Panc1 (cell line): ENCODE measurements at regions of chr2 and their contacts with region 1.

Region 1: DNA sequence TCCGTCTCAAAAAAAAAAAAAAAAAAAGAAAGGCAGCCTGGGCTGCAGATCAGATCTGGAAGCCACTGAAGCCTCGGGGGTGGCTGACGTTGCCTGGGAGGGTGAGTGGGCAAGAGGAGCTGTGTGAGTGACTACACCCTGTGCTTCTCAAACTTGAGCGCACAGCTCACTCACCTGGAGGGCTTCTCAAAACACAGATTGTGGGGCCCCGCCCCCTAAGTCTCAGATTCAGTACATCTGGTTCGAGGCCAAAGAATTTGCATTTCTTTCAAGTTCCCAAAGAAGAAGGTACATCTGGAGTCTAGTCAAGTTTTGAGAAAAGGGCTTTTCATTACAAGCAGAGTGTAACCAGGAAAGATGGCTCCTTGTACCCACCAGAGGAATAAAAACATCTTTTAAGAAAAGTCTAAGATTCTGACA is 97.7 kb upstream of the CAB39 start:
- DNase-seq: no peak
- ATAC-seq: no peak
- H3K4me3 ChIP-seq: no peak overlapping the region
- H3K27ac ChIP-seq: no peak overlapping the region
- H3K4me1 ChIP-seq: no peaks in the 10 kb centered on the region
- H3K27me3 ChIP-seq: no peaks in the 10 kb centered on the region
- CTCF ChIP-seq: no peak

Region 2: DNA sequence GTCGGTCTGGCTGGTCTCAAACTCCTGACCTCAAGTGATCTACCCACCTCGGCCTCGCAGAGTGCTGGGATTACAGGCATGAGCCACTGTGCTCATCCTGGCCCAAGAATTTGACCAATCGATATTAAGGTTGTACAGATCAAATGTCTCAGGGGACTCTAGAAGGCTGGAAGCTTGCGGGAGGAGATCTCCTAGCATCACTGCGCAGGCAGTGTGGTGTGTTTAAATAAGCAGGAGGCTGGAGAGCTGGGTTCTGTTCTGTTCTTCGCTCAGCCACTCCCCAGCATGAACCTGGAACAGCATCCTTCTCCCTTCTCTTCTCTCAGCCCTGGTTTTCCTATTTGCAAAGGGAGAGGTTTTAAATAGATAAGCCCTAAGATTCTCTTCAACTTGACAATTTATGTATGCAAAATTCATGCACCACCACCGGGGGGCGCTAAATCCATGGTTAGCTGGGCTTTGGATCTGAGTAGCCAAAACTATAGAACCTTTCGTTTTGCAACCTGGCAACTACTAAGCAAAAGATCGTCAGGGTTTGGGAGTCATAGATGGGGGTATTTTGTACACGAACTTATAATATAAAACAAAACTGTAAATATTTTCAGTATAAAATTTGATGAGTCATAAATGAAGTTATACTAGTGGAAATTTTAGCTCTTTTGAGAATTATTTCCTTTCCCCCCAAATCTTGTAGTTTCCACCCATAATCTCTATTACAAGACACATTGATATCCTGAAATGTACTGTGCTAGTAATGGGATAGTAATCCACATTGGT is 606.8 kb before region 1 on chr2:
- CTCF ChIA-PET with region 1: no interaction called
- POLR2A ChIA-PET with region 1: no interaction called
- in situ Hi-C with region 1: no loop called
- intact Hi-C with region 1: loop called (anchors 1 kb)
- DNase-seq: peak; percentile 56
- ATAC-seq: peak; percentile 76
- H3K4me3 ChIP-seq: no peak overlapping the region
- H3K27ac ChIP-seq: no peak overlapping the region
- H3K4me1 ChIP-seq: no peaks in the 10 kb centered on the region
- H3K27me3 ChIP-seq: no peaks in the 10 kb centered on the region
- CTCF ChIP-seq: peak; percentile 92

Region 3: GRCh38 chr2:230068016-230068650 is 546.8 kb before region 1 on chr2:
- CTCF ChIA-PET with region 1: interaction called, 3 read pairs
- POLR2A ChIA-PET with region 1: no interaction called
- in situ Hi-C with region 1: no loop called
- intact Hi-C with region 1: loop called (anchors 5 kb)
- DNase-seq: no peak
- ATAC-seq: peak; percentile 78
- H3K4me3 ChIP-seq: peak overlapping the region; percentile 51 to 70
- H3K27ac ChIP-seq: peak overlapping the region; percentile 39; the same call in 1 of the 2 replicates
- H3K4me1 ChIP-seq: no peaks in the 10 kb centered on the region
- H3K27me3 ChIP-seq: no peaks in the 10 kb centered on the region
- CTCF ChIP-seq: no peak

Region 4: GRCh38 chr2:230170532-230170931 is 444.4 kb before region 1 on chr2:
- CTCF ChIA-PET with region 1: no interaction called
- POLR2A ChIA-PET with region 1: no interaction called
- in situ Hi-C with region 1: no loop called
- intact Hi-C with region 1: loop called (anchors 10 kb)
- DNase-seq: no peak
- ATAC-seq: no peak
- H3K4me3 ChIP-seq: no peak overlapping the region
- H3K27ac ChIP-seq: no peak overlapping the region
- H3K4me1 ChIP-seq: no peaks in the 10 kb centered on the region
- H3K27me3 ChIP-seq: no peaks in the 10 kb centered on the region
- CTCF ChIP-seq: no peak

Region 5: GRCh38 chr2:230798769-230799399 is 184.0 kb after region 1 on chr2:
- CTCF ChIA-PET with region 1: no interaction called
- POLR2A ChIA-PET with region 1: no interaction called
- in situ Hi-C with region 1: no loop called
- intact Hi-C with region 1: loop called (anchors 5 kb)
- DNase-seq: no peak
- ATAC-seq: no peak; the same call in 1 of the 2 replicates
- H3K4me3 ChIP-seq: no peak overlapping the region
- H3K27ac ChIP-seq: no peak overlapping the region
- H3K4me1 ChIP-seq: peaks cover 11% of the 10 kb centered on the region
- H3K27me3 ChIP-seq: no peaks in the 10 kb centered on the region
- CTCF ChIP-seq: peak; percentile 66; the same call in 1 of the 2 replicates